Naive thymus-derived CD4-positive, alpha-beta T cell (primary cell): ENCODE measurements at regions of chr7 and their contacts with region 1.

Region 1: DNA sequence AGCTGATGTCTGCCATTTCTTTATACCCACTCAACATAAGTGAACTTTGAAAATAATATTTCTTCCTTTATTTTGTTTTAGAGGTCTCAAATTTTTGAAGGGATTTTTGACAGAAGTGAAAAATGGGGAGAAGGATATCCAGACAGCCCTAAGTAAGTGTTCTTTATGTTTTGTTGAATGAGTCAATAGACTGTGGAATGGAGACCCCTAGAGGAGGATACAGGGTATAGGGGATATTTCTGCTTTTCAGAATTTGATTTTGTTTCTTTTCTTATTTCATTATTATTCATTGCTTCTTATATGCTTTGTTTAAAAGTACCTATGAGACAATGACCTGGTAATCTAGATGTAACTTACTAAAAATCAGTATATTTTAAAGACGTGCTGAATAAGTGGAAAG is 34.4 kb downstream of the PLEKHA8 start:
- DNase-seq: peak in 5 of 9 donors; percentile 17 to 36 (median 19)
- ATAC-seq: peak; percentile 76
- H3K4me3 ChIP-seq: no peak overlapping the region
- H3K4me3 Mint-ChIP-seq: no peak overlapping the region
- H3K27ac ChIP-seq: no peak overlapping the region
- H3K27ac Mint-ChIP-seq: no peak overlapping the region
- H3K4me1 ChIP-seq: no peaks in the 10 kb centered on the region
- H3K4me1 Mint-ChIP-seq: peaks cover 0 to 12% (median 6%) of the 10 kb centered on the region in 7 donors
- H3K27me3 ChIP-seq: no peaks in the 10 kb centered on the region
- H3K27me3 Mint-ChIP-seq: no peaks in the 10 kb centered on the region

Region 2: DNA sequence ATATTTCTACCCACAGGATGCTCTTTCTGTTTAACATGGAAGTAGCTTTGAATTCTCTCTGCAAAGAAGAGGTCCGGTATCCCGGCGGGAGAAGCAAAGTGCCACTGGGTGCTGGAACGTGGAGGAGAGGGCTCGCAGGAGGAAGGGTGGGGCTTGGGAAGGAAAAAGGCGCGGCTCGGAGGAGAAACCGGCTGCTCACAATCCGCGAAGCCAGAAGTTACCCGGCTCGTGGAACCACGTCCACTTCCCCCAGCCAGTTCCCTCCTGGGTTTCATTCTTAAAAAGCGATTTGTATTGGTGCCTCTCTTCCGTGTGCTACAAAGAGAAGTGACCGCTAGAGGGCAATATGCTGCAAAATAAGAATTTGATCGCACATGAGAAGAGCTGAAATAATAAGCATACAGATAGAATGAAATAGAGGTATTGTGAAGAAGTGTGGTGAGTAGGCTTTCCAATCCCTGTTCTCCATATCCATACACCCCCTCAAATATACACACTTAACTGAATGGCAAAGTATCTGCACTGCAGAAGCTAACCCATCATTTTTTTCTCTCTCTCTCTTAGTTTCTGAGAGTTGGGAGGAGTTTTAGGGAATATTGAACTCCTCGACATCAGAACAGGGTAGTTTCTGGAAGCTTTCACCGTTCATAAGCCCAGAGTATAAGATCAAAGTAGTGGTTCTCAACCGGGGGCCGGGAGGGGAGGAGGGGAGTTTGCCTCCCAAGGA is 1135.6 kb before region 1 on chr7:
- CTCF ChIA-PET with region 1: no interaction called
- POLR2A ChIA-PET with region 1: no interaction called
- intact Hi-C with region 1: loop called in 1 of 2 experiments (anchors 10 kb)
- DNase-seq: peak; percentile 16 to 72 (median 60)
- ATAC-seq: peak; percentile 93
- H3K4me3 ChIP-seq: peak overlapping the region; percentile 57
- H3K4me3 Mint-ChIP-seq: peak overlapping the region; percentile 79 to 97 (median 90)
- H3K27ac ChIP-seq: no peak overlapping the region
- H3K27ac Mint-ChIP-seq: peak overlapping the region in 8 of 9 donors; percentile 9 to 92 (median 53)
- H3K4me1 ChIP-seq: peaks cover 4 to 12% of the 10 kb centered on the region in 2 donors
- H3K4me1 Mint-ChIP-seq: peaks cover 0 to 36% (median 23%) of the 10 kb centered on the region in 7 donors
- H3K27me3 ChIP-seq: no peaks in the 10 kb centered on the region
- H3K27me3 Mint-ChIP-seq: peaks cover 3 to 29% (median 7%) of the 10 kb centered on the region in 5 donors

Region 3: DNA sequence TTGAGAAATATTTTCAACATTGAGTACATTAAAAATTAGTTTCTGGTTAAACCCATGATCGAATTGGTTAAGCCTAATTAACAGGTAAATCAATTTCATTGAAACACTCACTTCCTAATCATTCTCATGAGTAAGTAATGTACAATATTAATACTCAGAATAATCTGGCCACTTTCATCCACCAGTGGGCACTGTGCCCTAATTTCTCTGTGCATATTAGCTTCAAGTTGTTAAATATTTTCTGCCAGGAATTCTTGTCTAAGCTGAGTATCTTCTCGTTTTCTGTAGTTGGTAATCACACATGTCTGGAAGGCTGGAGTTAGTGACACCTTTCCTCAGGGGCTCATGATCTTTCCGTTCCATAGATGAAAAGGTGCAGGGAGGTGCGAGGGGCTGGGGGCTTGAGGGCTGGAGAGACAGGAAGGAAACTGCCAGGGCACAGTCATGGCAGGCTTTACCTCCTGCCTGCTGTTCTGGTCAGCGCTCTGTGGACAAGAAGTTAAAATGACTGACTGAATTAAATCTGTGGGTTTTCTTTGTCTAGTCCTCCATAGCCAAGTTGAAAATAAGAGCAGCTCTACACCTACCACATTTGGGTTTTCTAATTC is 184.4 kb before region 1 on chr7:
- CTCF ChIA-PET with region 1: interaction called, 6 read pairs
- POLR2A ChIA-PET with region 1: no interaction called
- intact Hi-C with region 1: loop called (anchors 1 to 5 kb)
- DNase-seq: peak in 4 of 9 donors; percentile 17 to 22 (median 20)
- ATAC-seq: peak; percentile 51
- H3K4me3 ChIP-seq: no peak overlapping the region
- H3K4me3 Mint-ChIP-seq: peak overlapping the region in 1 of 10 donors; percentile 4
- H3K27ac ChIP-seq: no peak overlapping the region
- H3K27ac Mint-ChIP-seq: no peak overlapping the region
- H3K4me1 ChIP-seq: peaks cover 0 to 2% of the 10 kb centered on the region in 2 donors
- H3K4me1 Mint-ChIP-seq: peaks cover 0 to 15% (median 10%) of the 10 kb centered on the region in 7 donors
- H3K27me3 ChIP-seq: no peaks in the 10 kb centered on the region
- H3K27me3 Mint-ChIP-seq: peaks cover 0 to 29% (median 11%) of the 10 kb centered on the region in 5 donors

Region 4: DNA sequence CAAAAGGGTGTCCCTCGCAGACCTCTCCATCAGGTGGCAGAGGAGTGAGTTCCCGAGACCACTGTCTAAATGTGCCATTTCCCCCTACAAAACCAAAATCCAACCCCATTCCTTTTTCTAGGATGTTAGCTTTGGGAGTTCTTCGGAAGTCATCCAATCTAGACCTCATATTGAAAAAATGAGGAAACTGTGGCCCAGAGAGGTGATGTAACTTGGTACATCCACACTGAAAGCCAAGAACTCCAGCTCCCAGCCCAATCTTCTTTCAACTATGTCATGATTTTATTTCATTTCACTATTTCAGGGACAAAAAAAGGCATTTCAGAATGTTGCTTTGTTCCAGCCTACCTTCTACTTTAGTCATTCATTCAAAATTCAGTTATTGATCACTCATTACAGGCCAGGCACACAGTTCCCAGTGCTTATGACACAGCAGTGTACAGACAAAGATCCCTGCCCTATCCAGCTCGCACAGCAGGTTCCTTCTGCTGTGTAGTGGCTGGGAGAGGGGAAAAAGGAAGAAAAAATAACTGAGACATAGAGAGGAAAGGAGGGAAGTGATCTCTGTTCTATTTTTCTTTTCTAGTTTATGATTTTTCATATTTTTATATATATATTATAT is 108.8 kb before region 1 on chr7:
- CTCF ChIA-PET with region 1: interaction called, 3 read pairs
- POLR2A ChIA-PET with region 1: no interaction called
- intact Hi-C with region 1: loop called in 1 of 2 experiments (anchors 5 kb)
- DNase-seq: no peak
- ATAC-seq: no peak
- H3K4me3 ChIP-seq: no peak overlapping the region
- H3K4me3 Mint-ChIP-seq: no peak overlapping the region
- H3K27ac ChIP-seq: no peak overlapping the region
- H3K27ac Mint-ChIP-seq: no peak overlapping the region
- H3K4me1 ChIP-seq: peaks cover 0 to 8% of the 10 kb centered on the region in 2 donors
- H3K4me1 Mint-ChIP-seq: peaks cover 9 to 20% (median 15%) of the 10 kb centered on the region in 7 donors
- H3K27me3 ChIP-seq: no peaks in the 10 kb centered on the region
- H3K27me3 Mint-ChIP-seq: peaks cover 0 to 7% (median 3%) of the 10 kb centered on the region in 5 donors

Region 5: GRCh38 chr7:29970158-29970557 is 92.4 kb before region 1 on chr7:
- CTCF ChIA-PET with region 1: no interaction called
- POLR2A ChIA-PET with region 1: no interaction called
- intact Hi-C with region 1: no loop called
- DNase-seq: no peak
- ATAC-seq: no peak
- H3K4me3 ChIP-seq: no peak overlapping the region
- H3K4me3 Mint-ChIP-seq: peak overlapping the region in 1 of 10 donors; percentile 27
- H3K27ac ChIP-seq: no peak overlapping the region
- H3K27ac Mint-ChIP-seq: peak overlapping the region in 1 of 9 donors; percentile 38
- H3K4me1 ChIP-seq: no peaks in the 10 kb centered on the region
- H3K4me1 Mint-ChIP-seq: peaks cover 0 to 25% (median 11%) of the 10 kb centered on the region in 7 donors
- H3K27me3 ChIP-seq: no peaks in the 10 kb centered on the region
- H3K27me3 Mint-ChIP-seq: peaks cover 17 to 34% (median 19%) of the 10 kb centered on the region in 5 donors

Region 6: GRCh38 chr7:30026229-30027064 is 36.1 kb before region 1 on chr7 and contains the start of gene FKBP14:
- CTCF ChIA-PET with region 1: interaction called, 8 read pairs
- POLR2A ChIA-PET with region 1: interaction called, 10 read pairs
- intact Hi-C with region 1: loop called (anchors 1 to 2 kb)
- DNase-seq: peak; percentile 70 to 93 (median 89)
- ATAC-seq: peak; percentile 91
- H3K4me3 ChIP-seq: peak within 1 kb of the TSS; percentile 79
- H3K4me3 Mint-ChIP-seq: peak within 1 kb of the TSS in 6 of 10 donors; percentile 85 to 98 (median 89)
- H3K27ac ChIP-seq: peak within 1 kb of the TSS; percentile 69
- H3K27ac Mint-ChIP-seq: peak within 1 kb of the TSS; percentile 74 to 94 (median 88)
- H3K4me1 ChIP-seq: peaks cover 6 to 20% of the 10 kb centered on the region in 2 donors
- H3K4me1 Mint-ChIP-seq: peaks cover 28 to 47% (median 40%) of the 10 kb centered on the region in 7 donors
- H3K27me3 ChIP-seq: no peaks in the 10 kb centered on the region
- H3K27me3 Mint-ChIP-seq: no peaks in the 10 kb centered on the region
- total RNA-seq, gene FKBP14: 4.0 to 6.5 (median 5.3) TPM

Region 7: GRCh38 chr7:30214651-30215137 is 152.1 kb after region 1 on chr7:
- CTCF ChIA-PET with region 1: no interaction called
- POLR2A ChIA-PET with region 1: no interaction called
- intact Hi-C with region 1: no loop called
- DNase-seq: no peak
- ATAC-seq: no peak
- H3K4me3 ChIP-seq: no peak overlapping the region
- H3K4me3 Mint-ChIP-seq: no peak overlapping the region
- H3K27ac ChIP-seq: no peak overlapping the region
- H3K27ac Mint-ChIP-seq: no peak overlapping the region
- H3K4me1 ChIP-seq: no peaks in the 10 kb centered on the region
- H3K4me1 Mint-ChIP-seq: no peaks in the 10 kb centered on the region
- H3K27me3 ChIP-seq: no peaks in the 10 kb centered on the region
- H3K27me3 Mint-ChIP-seq: peaks cover 0 to 33% (median 13%) of the 10 kb centered on the region in 5 donors

Region 8: DNA sequence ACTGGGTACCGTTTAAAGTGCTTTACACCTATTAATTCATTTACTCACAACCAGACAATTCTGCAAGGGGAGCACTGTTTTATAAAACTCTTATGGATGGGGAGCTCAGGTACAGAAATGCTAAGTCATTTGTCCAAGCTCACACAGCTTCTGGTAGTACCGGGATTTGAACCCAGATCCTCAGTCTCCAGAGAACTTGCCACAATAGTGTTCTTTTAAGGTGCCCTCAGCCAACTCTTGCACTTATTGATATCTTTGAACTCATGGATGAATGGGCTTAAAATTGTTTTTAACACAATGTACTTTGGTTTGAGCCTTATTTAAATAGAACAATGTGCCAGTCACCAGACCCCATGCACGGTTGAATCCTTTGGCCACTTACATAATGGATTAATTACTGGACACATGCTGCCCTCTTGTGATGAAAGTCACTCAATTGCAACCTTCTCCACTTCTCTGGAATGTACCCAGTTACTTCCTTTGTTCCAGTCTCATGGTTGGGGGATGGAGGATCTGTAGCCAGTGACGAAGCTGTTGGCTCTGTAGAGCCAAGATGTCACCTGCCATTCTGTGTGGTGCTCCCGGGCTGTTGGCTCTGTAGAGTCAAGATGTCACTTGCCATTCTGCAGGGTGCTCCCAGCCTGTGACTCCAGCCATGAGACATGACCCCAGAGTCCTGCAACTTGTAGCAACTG is 350.4 kb after region 1 on chr7:
- CTCF ChIA-PET with region 1: no interaction called
- POLR2A ChIA-PET with region 1: no interaction called
- intact Hi-C with region 1: loop called in 1 of 2 experiments (anchors 10 kb)
- DNase-seq: peak in 3 of 9 donors; percentile 7 to 15 (median 8)
- ATAC-seq: peak; percentile 49
- H3K4me3 ChIP-seq: no peak overlapping the region
- H3K4me3 Mint-ChIP-seq: no peak overlapping the region
- H3K27ac ChIP-seq: no peak overlapping the region
- H3K27ac Mint-ChIP-seq: no peak overlapping the region
- H3K4me1 ChIP-seq: no peaks in the 10 kb centered on the region
- H3K4me1 Mint-ChIP-seq: peaks cover 0 to 6% (median 0%) of the 10 kb centered on the region in 7 donors
- H3K27me3 ChIP-seq: no peaks in the 10 kb centered on the region
- H3K27me3 Mint-ChIP-seq: no peaks in the 10 kb centered on the region

Region 9: GRCh38 chr7:30717181-30717580 is 654.6 kb after region 1 on chr7:
- CTCF ChIA-PET with region 1: no interaction called
- POLR2A ChIA-PET with region 1: no interaction called
- intact Hi-C with region 1: no loop called
- DNase-seq: no peak
- ATAC-seq: no peak
- H3K4me3 ChIP-seq: no peak overlapping the region
- H3K4me3 Mint-ChIP-seq: no peak overlapping the region
- H3K27ac ChIP-seq: no peak overlapping the region
- H3K27ac Mint-ChIP-seq: no peak overlapping the region
- H3K4me1 ChIP-seq: no peaks in the 10 kb centered on the region
- H3K4me1 Mint-ChIP-seq: peaks cover 0 to 10% (median 0%) of the 10 kb centered on the region in 7 donors
- H3K27me3 ChIP-seq: no peaks in the 10 kb centered on the region
- H3K27me3 Mint-ChIP-seq: no peaks in the 10 kb centered on the region